ENCODE measurements at regions of chr2 and their contacts with region 1.

Region 1: GRCh38 chr2:86440631-86441391 is at the start of gene KDM3A:
- DNase-seq: peak; percentile 99
- H3K4me3 ChIP-seq: peak within 1 kb of the TSS; percentile 85 to 87 (median 86)
- H3K27ac ChIP-seq: peak within 1 kb of the TSS; percentile 93 to 98 (median 94)
- H3K4me1 ChIP-seq: peaks cover 20 to 32% of the 10 kb centered on the region in 2 donors
- H3K27me3 ChIP-seq: no peaks in the 10 kb centered on the region
- CTCF ChIP-seq: no peak
- POLR2A ChIP-seq: peak in 1 of 2 donors; percentile 99
- total RNA-seq, gene KDM3A: 39.5 to 60.9 (median 51.1) TPM

Region 2: DNA sequence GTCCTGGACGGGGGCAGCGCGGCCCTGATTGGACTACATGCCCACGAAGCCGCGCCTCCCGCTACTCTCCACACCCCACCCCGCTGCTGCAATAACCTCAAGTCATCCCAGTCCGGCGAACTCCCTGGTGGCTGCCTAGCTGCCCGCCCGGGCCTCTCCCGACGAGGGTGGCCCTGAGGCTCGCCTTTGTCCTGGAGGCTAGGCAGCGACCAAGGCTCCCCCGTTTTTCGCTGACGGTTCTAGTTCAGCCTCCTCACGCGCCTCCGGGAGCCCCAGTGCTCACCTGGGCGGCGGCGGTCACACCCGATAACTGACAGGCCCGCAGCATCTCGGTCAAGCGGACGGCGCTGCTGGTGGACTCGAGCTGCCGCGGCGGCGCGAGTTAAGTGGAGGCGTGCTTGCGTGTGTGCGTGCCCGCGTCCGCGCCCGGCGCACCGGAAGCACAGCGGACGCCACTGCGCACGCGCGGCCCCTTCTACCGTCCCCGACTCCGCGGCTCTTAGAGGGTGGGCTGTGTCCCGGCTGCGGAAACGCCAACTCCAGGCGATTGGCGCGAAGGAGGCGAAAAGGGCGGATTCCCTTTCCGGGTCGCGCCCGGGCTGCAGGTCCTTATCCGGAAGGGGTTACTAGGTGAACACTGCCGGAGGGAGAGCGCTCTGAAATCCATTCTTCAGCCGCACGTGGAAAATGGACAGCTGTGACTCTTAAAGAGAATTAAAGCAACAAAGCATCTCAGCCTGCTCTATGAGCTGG is 245.6 kb before region 1 on chr2 and contains the start of gene IMMT:
- intact Hi-C with region 1: loop called (anchors 10 kb)
- DNase-seq: peak; percentile 96 to 97
- H3K4me3 ChIP-seq: peak within 1 kb of the TSS; percentile 65 to 97 (median 86)
- H3K27ac ChIP-seq: peak within 1 kb of the TSS; percentile 97 to 99 (median 99)
- H3K4me1 ChIP-seq: peaks cover 17 to 21% of the 10 kb centered on the region in 2 donors
- H3K27me3 ChIP-seq: no peaks in the 10 kb centered on the region
- CTCF ChIP-seq: peak in 1 of 6 experiments; percentile 5
- POLR2A ChIP-seq: peak; percentile 70 to 74
- total RNA-seq, gene IMMT: 54.0 to 88.2 (median 67.1) TPM